ENCODE measurements at regions of chr4 and their contacts with region 1.

Region 1: DNA sequence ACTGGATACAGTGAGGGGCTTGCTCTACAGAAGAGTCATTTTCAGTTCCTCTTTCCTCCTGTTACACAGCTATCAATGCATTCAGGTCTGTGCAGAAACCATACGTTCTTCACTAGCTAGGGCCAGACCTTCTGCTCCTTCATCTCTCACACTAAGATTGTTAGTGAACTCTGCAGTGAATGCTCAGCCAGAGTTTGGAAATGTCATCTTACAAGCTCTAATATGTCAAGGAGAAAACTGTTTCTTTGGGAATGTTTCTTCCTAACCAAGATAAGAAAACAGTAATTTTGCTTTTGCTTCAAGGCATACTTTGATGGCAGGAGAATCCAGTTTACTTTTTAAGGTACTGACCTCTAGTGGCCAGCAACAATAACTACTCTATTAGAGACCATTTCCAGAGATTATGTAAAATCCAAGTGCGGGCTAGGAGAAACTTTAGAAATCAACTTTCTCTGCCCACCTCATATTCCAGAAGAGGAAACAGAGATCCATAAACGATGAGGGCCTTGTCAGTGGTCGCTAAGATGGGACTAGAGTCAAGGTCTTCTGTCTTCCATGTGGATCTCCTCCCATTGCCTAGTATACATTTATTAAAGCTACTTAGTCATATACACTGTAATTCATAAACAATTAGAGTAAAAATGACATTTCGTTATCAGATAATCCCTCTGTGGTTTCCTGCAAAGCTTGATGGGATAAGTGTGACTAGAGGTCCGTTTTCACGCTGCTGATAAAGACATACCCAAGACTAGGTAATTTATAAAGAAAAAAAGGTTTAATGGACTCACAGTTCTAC is 12.1 kb upstream of the CC2D2A start:
- DNase-seq: no peak
- ATAC-seq: peak in 3 of 4 donors; percentile 64 to 75 (median 67)
- H3K4me3 ChIP-seq: no peak overlapping the region
- H3K27ac ChIP-seq: no peak overlapping the region
- H3K4me1 ChIP-seq: peaks cover 3% of the 10 kb centered on the region
- H3K27me3 ChIP-seq: no peaks in the 10 kb centered on the region
- CTCF ChIP-seq: peak; percentile 78

Region 2: DNA sequence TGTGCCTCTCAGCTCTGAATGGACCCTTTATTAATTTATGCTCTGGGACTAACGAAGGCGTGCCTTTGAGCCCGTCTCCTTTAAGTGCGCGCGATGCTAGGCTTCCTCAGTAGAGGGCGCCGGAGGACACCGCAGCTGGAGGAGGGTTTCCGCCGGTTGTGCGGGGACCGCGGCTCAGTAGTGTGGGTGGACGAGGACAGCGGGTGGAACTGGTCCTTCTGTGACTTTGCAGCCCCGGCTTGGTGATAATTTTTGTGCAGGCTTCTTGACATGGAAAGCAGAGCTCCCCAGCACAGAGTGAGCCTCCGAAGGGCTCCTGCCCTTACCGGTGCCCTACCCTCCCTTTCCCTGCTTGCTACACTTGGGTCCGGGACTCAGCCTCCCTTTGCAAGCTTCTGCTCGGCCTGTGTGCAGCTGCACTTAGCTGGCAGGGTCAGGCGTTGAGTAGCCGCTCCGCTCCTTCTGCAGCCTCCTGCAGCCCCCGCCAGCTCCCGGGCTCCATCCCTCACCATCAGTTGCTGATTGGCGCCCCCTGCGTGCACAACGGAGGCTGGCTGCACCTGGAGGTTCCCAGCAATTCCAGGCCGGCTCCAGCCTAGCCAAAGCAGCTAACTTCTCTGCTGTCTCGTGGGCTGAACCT is 1803.3 kb before region 1 on chr4:
- intact Hi-C with region 1: loop called (anchors 10 kb)
- DNase-seq: peak; percentile 75 to 86
- ATAC-seq: peak; percentile 81 to 98 (median 94)
- H3K4me3 ChIP-seq: peak overlapping the region; percentile 66
- H3K27ac ChIP-seq: no peak overlapping the region
- H3K4me1 ChIP-seq: peaks cover 5% of the 10 kb centered on the region
- H3K27me3 ChIP-seq: peaks cover 0 to 2% (median 0%) of the 10 kb centered on the region in 3 donors
- CTCF ChIP-seq: peak; percentile 74

Region 3: GRCh38 chr4:15238720-15239119 is 218.9 kb before region 1 on chr4:
- intact Hi-C with region 1: loop called (anchors 2 to 10 kb)
- DNase-seq: no peak
- ATAC-seq: peak in 2 of 4 donors; percentile 54 to 71
- H3K4me3 ChIP-seq: no peak overlapping the region
- H3K27ac ChIP-seq: no peak overlapping the region
- H3K4me1 ChIP-seq: no peaks in the 10 kb centered on the region
- H3K27me3 ChIP-seq: no peaks in the 10 kb centered on the region
- CTCF ChIP-seq: peak; percentile 39

Measured in psoas muscle (tissue), 8 donors.